ENCODE measurements at regions of chr19 and their contacts with region 1.

Region 1: DNA sequence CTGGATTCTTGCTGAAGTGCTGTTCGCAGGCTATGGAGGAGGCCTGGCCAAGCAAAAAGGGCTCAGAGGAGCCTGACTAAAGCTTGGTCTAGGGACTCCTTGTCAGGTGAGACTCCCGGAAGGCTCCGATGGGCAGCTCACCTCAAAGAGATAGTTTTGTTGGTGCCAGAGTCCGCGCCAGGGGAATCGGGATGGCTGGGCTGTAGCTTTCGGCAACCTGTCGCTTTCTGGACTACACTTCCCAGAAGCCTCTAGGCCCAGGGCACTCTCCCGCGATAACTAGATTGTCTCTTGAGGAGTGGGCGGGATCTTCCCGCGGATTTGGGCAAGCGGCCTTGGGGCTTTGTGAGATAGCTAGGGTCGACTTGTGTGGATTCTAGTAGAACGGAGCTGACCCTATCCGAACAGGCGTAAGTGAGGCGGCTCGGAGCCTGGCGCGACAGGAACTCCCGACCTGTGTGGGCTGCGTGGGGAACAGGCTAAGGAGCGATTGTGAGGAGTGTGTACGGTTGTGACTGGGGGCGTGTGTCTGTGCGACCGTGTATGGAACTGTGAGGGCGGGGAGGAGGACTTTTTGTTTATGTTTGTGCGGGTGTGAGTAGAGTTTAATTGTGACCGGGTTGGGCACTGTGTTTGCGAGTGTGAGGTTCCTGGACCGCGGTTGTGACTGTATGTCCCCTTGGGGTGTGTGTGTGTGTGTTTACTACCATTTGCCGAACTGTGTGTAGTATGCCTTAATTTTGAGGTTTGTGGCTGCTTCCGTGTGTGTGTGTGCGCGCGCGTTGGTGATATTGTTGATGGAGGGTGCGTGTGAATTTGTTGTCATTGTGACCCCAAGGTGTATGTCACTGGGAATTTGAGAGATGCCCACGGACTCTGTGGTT is at the start of gene ZNF345:
- H3K4me3 ChIP-seq: peak within 1 kb of the TSS; percentile 66
- H3K27ac ChIP-seq: peak within 1 kb of the TSS; percentile 66
- H3K4me1 ChIP-seq: peaks cover 6% of the 10 kb centered on the region; the same call in 1 of the 2 replicates
- CTCF ChIP-seq: peak; percentile 55; the same call in 1 of the 2 replicates

Region 2: GRCh38 chr19:36573020-36573885 is 277.5 kb before region 1 on chr19 and contains the start of gene ZNF529:
- CTCF ChIA-PET with region 1: no interaction called
- POLR2A ChIA-PET with region 1: interaction called, 10 read pairs
- H3K4me3 ChIP-seq: peak within 1 kb of the TSS; percentile 70
- H3K27ac ChIP-seq: peak within 1 kb of the TSS; percentile 86
- H3K4me1 ChIP-seq: peaks cover 18% of the 10 kb centered on the region
- CTCF ChIP-seq: peak; percentile 89

Region 3: GRCh38 chr19:36665832-36666231 is 185.0 kb before region 1 on chr19:
- CTCF ChIA-PET with region 1: no interaction called
- POLR2A ChIA-PET with region 1: interaction called, 10 read pairs
- H3K4me3 ChIP-seq: peak overlapping the region; percentile 55
- H3K27ac ChIP-seq: peak overlapping the region; percentile 79; the same call in 1 of the 2 replicates
- H3K4me1 ChIP-seq: peaks cover 3% of the 10 kb centered on the region; the same call in 1 of the 2 replicates
- CTCF ChIP-seq: no peak

Region 4: DNA sequence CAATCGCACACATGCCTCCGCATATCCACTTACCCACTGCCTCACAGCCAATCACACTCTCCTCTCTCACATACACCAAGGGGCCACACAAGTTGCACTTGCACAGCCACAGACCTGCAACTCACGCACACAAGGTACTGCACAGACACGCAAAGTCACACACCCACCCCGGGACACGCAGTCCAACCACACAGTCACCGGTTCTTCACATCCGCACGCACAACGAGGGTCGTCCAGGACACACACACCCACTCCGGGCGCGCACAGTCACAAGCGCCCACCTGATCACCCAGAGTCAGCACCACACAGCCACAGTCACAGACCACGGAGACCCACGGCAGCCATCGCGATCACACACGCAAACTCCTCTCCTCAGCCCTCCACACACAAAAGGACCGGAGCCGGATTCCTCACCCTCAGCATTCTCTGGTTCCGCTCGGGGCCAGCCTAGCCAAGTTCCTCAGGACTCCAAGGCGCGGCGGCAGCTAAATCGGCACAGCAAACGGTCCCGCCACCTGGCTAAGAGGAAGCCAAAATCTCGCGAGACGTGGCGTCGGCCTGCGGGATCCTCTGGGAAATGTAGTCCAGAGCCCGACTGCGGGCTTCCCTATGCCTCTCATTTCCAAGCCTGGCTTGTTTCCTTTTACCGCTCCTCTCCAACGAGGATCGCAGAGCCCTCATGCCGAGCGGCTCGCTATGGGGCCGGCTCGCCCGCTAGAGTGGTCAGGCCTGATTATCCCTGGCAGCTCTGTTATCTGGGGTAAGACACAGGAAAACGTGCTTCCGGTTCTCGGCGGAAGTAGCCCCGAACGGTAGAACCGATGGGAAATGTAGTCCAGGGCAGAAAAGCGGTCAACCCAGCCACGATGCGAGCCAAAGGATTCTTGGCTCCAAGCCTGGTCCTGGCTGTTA is 78.2 kb before region 1 on chr19 and contains the start of gene ZNF850:
- CTCF ChIA-PET with region 1: no interaction called
- POLR2A ChIA-PET with region 1: interaction called, 14 read pairs
- H3K4me3 ChIP-seq: peak within 1 kb of the TSS; percentile 53
- H3K27ac ChIP-seq: peak within 1 kb of the TSS; percentile 84
- H3K4me1 ChIP-seq: no peaks in the 10 kb centered on the region
- CTCF ChIP-seq: peak; percentile 50

Region 5: GRCh38 chr19:36837906-36838783 is 12.7 kb before region 1 on chr19 and contains the start of gene ZNF790:
- CTCF ChIA-PET with region 1: interaction called, 3 read pairs
- POLR2A ChIA-PET with region 1: interaction called, 122 read pairs
- H3K4me3 ChIP-seq: peak within 1 kb of the TSS; percentile 57
- H3K27ac ChIP-seq: peak within 1 kb of the TSS; percentile 83
- H3K4me1 ChIP-seq: no peaks in the 10 kb centered on the region
- CTCF ChIP-seq: peak; percentile 32

Region 6: GRCh38 chr19:36950335-36951119 is 99.7 kb after region 1 on chr19:
- CTCF ChIA-PET with region 1: no interaction called
- POLR2A ChIA-PET with region 1: no interaction called
- H3K4me3 ChIP-seq: no peak overlapping the region
- H3K27ac ChIP-seq: no peak overlapping the region
- H3K4me1 ChIP-seq: no peaks in the 10 kb centered on the region
- CTCF ChIP-seq: no peak

Region 7: DNA sequence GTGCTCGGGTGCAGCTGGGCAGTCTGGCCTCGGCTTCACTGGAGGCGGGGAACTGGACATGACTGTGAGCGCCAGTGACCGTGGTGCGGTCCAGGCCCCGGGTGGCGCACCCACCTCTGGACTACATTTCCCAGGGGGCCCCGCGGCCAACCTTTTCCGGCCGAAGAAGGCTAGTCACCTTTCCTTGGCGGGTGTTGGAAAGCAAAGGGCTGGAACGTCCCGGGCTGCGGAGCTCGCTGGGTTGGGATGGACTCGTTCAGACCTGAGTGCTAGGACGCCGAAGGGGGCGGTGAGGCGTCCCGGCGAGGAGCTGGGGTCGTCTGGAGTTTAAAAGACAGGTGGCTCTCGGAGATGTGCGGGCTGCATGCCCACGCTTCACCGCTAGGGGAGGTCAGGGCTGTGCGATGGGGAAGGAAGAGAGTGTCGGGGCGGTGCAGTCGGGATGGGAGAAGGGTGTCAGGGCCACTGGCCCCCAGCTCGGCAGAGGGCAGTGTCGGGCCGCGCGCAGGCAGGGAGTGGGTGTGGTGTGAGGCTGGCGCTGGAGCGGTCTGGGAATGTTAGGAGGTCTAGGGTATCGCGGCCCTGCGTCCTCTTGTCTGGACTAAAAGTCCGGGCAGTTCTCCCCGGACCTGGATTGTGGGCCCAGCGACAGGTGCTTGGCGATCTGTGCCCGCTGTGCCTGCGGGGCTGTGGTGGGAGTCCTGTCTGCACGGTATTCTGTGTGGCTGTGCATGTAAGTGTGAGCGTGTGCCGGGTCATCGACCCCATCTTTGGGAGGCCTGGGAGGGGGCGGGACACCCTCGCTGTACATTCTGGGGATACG is 122.4 kb after region 1 on chr19:
- CTCF ChIA-PET with region 1: no interaction called
- POLR2A ChIA-PET with region 1: no interaction called
- H3K4me3 ChIP-seq: peak overlapping the region; percentile 43
- H3K27ac ChIP-seq: no peak overlapping the region
- H3K4me1 ChIP-seq: no peaks in the 10 kb centered on the region
- CTCF ChIP-seq: no peak

Measured in HEK293 (cell line).